ENCODE measurements at regions of chr12 and their contacts with region 1.

Region 1: GRCh38 chr12:71685914-71686665 is at the start of gene TMEM19:
- DNase-seq: peak; percentile 92 to 95 (median 93)
- ATAC-seq: peak; percentile 95 to 99 (median 99)
- H3K4me3 ChIP-seq: peak within 1 kb of the TSS; percentile 50 to 88 (median 78)
- H3K27ac ChIP-seq: peak within 1 kb of the TSS; percentile 54 to 99 (median 94)
- H3K4me1 ChIP-seq: peaks cover 0 to 46% (median 20%) of the 10 kb centered on the region in 12 donors
- H3K27me3 ChIP-seq: no peaks in the 10 kb centered on the region
- CTCF ChIP-seq: peak in 5 of 12 donors; percentile 17 to 61 (median 47)
- POLR2A ChIP-seq: peak in 1 of 2 donors; percentile 76
- total RNA-seq, gene TMEM19: 15.5 to 39.5 (median 28.8) TPM

Region 2: DNA sequence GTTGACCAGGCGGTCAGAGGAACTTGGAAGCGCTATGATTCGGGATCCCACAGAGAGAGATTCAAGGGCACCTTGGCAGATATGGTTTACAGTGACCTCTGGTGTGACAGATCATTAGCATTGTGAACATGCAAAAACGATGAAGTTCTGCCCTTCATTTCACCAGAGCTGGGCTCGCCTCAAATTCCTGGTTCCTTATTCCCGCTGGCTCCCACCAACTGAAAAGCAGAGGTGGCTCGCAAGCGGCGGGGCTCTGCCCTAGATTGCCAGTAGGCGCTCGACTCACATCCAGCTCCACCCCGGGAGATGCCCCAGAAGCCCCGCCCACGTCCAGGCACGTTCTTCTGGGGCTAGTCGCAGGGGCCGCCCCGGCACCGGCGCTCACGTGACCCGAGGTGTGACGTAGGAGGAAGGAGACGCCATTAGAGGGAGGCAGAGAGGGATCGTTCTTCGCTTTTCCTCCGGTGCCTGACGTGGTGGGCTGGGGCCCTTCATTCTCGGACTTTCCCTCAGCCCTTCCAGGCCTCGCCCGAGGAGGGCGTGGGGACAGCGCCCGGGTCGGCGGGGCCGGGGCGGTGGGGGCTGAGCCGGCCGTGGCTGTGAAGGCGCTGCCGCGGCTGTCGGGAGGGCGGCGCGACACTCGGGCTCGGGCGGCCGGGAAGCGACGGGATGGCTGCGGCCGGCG is 68.5 kb after region 1 on chr12 and contains the start of gene RAB21:
- intact Hi-C with region 1: loop called in 5 of 10 experiments (anchors 5 to 10 kb)
- DNase-seq: peak; percentile 99
- ATAC-seq: peak; percentile 95 to 98 (median 96)
- H3K4me3 ChIP-seq: peak within 1 kb of the TSS; percentile 59 to 97 (median 87)
- H3K27ac ChIP-seq: peak within 1 kb of the TSS; percentile 93 to 98 (median 96)
- H3K4me1 ChIP-seq: peaks cover 0 to 42% (median 24%) of the 10 kb centered on the region in 12 donors
- H3K27me3 ChIP-seq: peaks cover 0 to 3% (median 0%) of the 10 kb centered on the region in 9 donors
- CTCF ChIP-seq: peak in 11 of 12 donors; percentile 13 to 56 (median 30)
- POLR2A ChIP-seq: peak; percentile 77 to 92
- total RNA-seq, gene RAB21: 42.4 to 236 (median 198) TPM

Region 3: DNA sequence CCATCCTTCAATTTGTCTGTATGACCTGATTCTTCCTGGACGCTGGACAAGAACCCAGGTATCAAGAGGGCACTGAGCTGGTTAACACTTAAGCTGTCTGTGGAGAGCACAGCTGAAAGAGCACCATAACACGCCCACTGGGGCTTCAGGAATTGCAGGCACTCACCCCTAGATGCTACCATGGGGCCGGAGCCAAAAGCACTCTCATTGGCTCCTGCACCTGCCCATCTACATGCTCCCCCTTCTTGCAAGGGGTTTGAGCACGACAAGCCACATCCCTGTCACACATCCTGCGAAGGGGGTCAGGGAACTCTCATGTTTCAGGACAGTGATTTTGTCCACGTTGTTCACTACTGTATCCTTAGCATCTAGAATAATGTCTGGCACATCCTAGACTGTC is 118.4 kb after region 1 on chr12:
- intact Hi-C with region 1: no loop called
- DNase-seq: no peak
- ATAC-seq: no peak
- H3K4me3 ChIP-seq: no peak overlapping the region
- H3K27ac ChIP-seq: no peak overlapping the region
- H3K4me1 ChIP-seq: peaks cover 0 to 3% (median 0%) of the 10 kb centered on the region in 12 donors
- H3K27me3 ChIP-seq: no peaks in the 10 kb centered on the region
- CTCF ChIP-seq: no peak
- POLR2A ChIP-seq: no peak

Measured in heart left ventricle (tissue), 16 donors.